Spleen (tissue), 13 donors: ENCODE measurements at regions of chr6 and their contacts with region 1.

Region 1: DNA sequence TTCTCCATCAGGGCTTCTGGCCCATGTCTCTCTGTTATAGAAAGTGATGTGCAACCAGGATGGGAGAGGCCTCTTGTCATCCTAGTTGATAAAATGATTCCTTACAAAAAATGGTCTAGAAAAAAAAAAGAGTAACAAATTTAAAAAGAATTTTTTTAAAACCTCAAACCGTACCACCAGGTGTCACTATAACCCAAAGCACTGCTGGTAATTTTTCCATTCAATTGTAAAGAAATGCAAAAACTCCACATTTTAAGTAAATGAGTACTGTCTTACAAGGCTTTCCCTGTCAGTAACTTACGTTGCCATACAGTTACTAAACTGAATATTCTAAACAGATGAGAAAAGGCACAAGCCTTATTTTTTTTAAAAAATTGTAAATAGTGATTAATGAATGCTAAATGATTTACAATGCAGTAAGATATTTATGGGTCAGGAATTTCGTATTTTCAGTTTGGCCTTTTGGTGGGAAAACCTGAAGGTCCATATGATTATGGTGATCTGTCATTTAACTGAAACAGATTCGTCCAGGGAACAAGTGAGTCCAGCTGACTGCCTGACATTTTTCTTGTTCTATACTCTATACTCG is 95.4 kb downstream of the OGFRL1 start:
- DNase-seq: no peak
- H3K4me3 ChIP-seq: no peak overlapping the region
- H3K27ac ChIP-seq: no peak overlapping the region
- H3K4me1 ChIP-seq: peaks cover 0 to 25% (median 13%) of the 10 kb centered on the region in 6 donors
- H3K27me3 ChIP-seq: no peaks in the 10 kb centered on the region
- CTCF ChIP-seq: peak in 6 of 11 experiments; percentile 22 to 62 (median 41)
- POLR2A ChIP-seq: no peak

Region 2: DNA sequence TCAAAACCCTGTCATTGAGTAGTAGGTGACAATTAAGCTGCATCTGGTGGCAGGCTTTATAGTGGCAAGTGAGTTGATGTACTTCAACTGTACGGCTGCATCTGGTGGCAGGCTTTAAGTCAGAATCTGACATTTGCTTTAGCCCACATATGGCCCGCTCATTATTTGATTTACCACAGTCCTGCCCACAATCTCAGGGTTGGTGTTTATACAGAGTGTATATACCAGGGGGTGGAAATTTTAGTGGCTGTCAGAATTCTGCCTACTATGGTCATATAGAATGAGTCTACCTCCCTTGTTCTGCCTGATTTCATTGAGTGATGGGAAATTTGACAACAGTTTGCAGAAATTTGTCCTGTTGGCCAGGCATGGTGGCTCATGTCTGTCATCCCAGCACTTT is 604.1 kb before region 1 on chr6:
- intact Hi-C with region 1: no loop called
- DNase-seq: no peak
- H3K4me3 ChIP-seq: no peak overlapping the region
- H3K27ac ChIP-seq: no peak overlapping the region
- H3K4me1 ChIP-seq: no peaks in the 10 kb centered on the region
- H3K27me3 ChIP-seq: no peaks in the 10 kb centered on the region
- CTCF ChIP-seq: no peak
- POLR2A ChIP-seq: no peak

Region 3: DNA sequence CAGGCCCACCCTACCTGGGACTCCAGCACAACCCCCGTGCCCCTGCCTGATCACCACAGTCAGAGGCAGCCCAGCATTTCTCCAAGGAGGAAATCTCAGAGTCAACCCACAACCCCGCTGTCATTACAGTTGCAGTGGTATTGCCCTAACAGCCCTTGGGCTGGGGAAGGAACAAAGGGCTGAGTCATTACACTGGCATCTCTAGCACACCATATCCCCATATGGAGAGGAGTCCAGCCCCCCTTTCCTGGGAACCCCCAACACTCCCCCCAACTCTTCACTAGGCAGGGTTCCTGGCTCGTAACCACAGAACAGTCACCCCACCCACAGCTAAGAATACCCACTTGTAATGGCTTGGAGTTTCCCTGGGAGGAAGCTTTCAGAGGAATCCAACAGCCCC is 244.7 kb before region 1 on chr6:
- intact Hi-C with region 1: no loop called
- DNase-seq: no peak
- H3K4me3 ChIP-seq: no peak overlapping the region
- H3K27ac ChIP-seq: no peak overlapping the region
- H3K4me1 ChIP-seq: no peaks in the 10 kb centered on the region
- H3K27me3 ChIP-seq: peaks cover 0 to 14% (median 0%) of the 10 kb centered on the region in 7 donors
- CTCF ChIP-seq: no peak
- POLR2A ChIP-seq: no peak

Region 4: GRCh38 chr6:71509191-71510005 is 125.4 kb after region 1 on chr6:
- intact Hi-C with region 1: loop called (anchors 5 kb)
- DNase-seq: no peak
- H3K4me3 ChIP-seq: no peak overlapping the region
- H3K27ac ChIP-seq: no peak overlapping the region
- H3K4me1 ChIP-seq: no peaks in the 10 kb centered on the region
- H3K27me3 ChIP-seq: no peaks in the 10 kb centered on the region
- CTCF ChIP-seq: no peak
- POLR2A ChIP-seq: no peak